AG04449 (cell line): ENCODE measurements at regions of chr18 and their contacts with region 1.

Region 1: GRCh38 chr18:23612435-23613085 is 26.3 kb upstream of the NPC1 start:
- DNase-seq: no peak
- H3K4me3 ChIP-seq: no peak overlapping the region
- CTCF ChIP-seq: no peak

Region 2: GRCh38 chr18:23416298-23416697 is 196.3 kb before region 1 on chr18:
- CTCF ChIA-PET with region 1: no interaction called
- POLR2A ChIA-PET with region 1: no interaction called
- DNase-seq: no peak
- H3K4me3 ChIP-seq: no peak overlapping the region
- CTCF ChIP-seq: no peak

Region 3: GRCh38 chr18:23626451-23627279 is 14.1 kb after region 1 on chr18:
- CTCF ChIA-PET with region 1: interaction called, 18 read pairs
- POLR2A ChIA-PET with region 1: no interaction called
- DNase-seq: no peak
- H3K4me3 ChIP-seq: no peak overlapping the region
- CTCF ChIP-seq: no peak

Region 4: DNA sequence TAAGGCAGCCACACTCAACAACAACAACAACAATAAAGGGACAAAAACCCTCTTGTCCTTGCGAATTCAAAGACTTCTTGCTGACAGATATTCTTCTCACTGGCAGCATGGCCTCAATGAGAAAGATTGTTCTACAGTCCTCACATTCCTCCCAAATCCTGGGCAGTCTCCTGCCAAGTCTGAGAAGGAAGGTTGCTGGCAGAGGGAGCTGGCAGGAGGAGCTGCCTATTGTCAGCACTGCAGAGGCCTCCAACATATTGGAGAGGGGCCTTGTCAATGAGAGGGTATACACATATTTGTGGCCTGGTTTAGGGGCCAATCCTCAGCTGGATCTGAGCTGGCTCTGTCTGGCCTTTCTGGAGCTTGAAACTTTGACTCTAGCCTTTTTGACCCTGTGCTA is 140.2 kb after region 1 on chr18:
- CTCF ChIA-PET with region 1: no interaction called
- POLR2A ChIA-PET with region 1: no interaction called
- DNase-seq: no peak
- H3K4me3 ChIP-seq: no peak overlapping the region
- CTCF ChIP-seq: no peak